Gastrocnemius medialis (tissue), 4 donors: ENCODE measurements at regions of chr20 and their contacts with region 1.

Region 1: DNA sequence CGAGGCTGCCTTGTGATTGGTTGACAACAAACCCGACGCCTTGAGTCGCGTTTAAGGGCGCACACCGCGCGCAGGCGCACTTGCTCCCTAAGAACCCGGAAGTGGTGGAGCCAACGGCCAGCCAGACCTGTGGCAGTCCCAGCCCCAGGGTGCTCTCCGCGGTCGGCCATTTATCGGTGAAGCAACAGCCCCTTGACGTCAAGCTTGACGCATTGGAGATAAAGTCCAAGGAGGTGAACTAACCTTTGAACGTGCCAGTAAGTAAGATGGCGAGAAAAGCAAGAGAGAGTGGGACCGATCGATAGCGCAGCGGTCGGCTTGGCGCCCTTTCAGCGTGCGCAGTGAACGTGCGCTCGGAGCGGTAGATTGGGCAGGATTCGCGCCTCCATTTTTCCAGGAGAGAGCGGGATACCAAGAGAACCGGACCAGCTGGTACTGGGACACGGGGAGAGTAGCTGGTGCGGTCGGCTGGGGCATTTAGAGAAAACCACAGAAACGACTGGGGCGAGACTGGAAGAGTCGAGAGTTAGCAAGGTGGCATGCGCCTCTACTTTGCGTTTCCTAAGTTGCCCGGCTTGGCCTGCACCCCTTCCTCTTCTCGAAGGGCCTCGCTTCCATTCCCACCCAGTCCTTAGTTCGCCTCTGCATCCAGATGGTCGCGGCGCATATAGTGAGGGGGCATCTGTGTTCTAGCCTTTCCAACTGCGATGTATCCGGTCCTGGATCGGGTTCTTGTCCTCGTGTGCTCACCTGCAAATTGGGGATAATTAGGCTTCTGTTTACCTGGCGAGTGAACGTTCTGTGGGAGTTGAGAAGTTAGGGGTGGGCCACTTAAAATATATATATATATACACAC is at the start of gene CSTF1:
- DNase-seq: peak; percentile 98 to 100
- ATAC-seq: peak; percentile 96 to 98
- H3K4me3 ChIP-seq: peak within 1 kb of the TSS; percentile 82 to 97 (median 86)
- H3K27ac ChIP-seq: peak within 1 kb of the TSS; percentile 86 to 94 (median 90)
- H3K4me1 ChIP-seq: peaks cover 22 to 23% of the 10 kb centered on the region in 2 donors
- H3K27me3 ChIP-seq: no peaks in the 10 kb centered on the region
- CTCF ChIP-seq: no peak
- POLR2A ChIP-seq: peak; percentile 37 to 52
- total RNA-seq, gene CSTF1: 14.2 to 23.2 (median 18.9) TPM

Region 2: GRCh38 chr20:56358596-56359211 is 33.8 kb before region 1 on chr20 and contains the start of gene FAM210B:
- in situ Hi-C with region 1: no loop called
- intact Hi-C with region 1: loop called (anchors 1 kb)
- DNase-seq: peak; percentile 76 to 87
- ATAC-seq: peak; percentile 88 to 93
- H3K4me3 ChIP-seq: peak within 1 kb of the TSS; percentile 62 to 93 (median 76)
- H3K27ac ChIP-seq: peak within 1 kb of the TSS; percentile 68 to 91 (median 81)
- H3K4me1 ChIP-seq: peaks cover 27 to 29% of the 10 kb centered on the region in 2 donors
- H3K27me3 ChIP-seq: no peaks in the 10 kb centered on the region
- CTCF ChIP-seq: no peak
- POLR2A ChIP-seq: peak; percentile 72 to 77
- total RNA-seq, gene FAM210B: 34.5 to 57.2 (median 41.4) TPM

Region 3: DNA sequence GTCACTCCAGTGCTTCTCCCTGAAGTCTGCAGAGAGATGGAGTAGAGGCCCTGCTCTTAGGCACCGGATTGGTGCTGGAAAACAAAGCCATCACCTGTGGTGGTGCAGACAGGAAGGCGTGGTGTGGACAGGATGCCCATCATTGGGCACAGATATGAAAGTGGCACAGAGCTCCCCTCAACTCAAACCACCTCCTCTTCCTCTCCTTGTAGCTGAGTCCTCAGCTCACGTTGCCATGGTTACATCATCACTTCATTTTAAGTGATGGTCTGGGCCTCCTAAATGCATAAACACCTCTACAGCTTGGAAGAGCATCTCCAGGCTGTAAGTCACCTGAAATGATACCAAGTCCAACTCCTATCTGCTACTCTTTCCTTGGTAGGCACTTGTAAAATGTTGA is 67.9 kb after region 1 on chr20:
- in situ Hi-C with region 1: loop called in 2 of 4 experiments (anchors 5 kb)
- intact Hi-C with region 1: no loop called
- DNase-seq: no peak
- ATAC-seq: no peak
- H3K4me3 ChIP-seq: no peak overlapping the region
- H3K27ac ChIP-seq: no peak overlapping the region
- H3K4me1 ChIP-seq: no peaks in the 10 kb centered on the region
- H3K27me3 ChIP-seq: no peaks in the 10 kb centered on the region
- CTCF ChIP-seq: no peak
- POLR2A ChIP-seq: no peak

Region 4: DNA sequence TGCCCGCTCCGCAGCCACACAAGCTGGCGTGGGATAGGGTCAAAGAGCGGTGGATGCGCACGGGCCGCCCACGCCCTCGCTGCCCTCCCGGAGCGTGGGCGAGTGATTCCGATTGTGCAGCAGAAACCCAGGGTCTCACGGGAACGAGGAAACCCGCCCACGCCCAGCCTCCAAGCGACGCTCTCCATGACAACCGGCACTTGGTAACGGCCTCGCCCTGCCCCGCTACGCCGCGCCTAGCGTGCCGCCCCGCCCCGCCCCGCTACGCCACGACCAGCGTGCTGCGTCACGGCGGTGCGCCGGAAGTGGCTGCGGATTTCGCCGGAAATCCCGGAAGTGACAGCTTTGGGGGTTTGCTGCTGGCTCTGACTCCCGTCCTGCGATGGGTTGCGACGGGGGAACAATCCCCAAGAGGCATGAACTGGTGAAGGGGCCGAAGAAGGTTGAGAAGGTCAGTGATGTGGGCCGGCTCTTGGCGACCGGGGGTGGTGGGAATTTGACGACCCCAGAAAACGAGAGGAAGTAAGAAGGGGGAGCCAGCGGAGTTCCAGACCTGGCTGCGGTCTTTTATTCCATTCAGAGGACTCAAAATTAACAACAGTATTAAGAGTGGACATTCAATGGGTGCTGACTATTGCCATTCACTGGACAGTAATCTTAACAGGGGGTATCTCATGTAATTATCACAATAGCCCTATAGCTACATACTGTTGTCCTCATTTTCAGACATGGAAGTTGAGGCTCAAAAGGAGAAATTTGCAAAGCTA is 76.0 kb after region 1 on chr20 and contains the start of gene RTF2:
- in situ Hi-C with region 1: loop called in 3 of 4 experiments (anchors 5 to 10 kb)
- intact Hi-C with region 1: loop called (anchors 1 kb)
- DNase-seq: peak; percentile 78 to 84
- ATAC-seq: peak; percentile 95 to 97
- H3K4me3 ChIP-seq: peak within 1 kb of the TSS; percentile 73 to 93 (median 92)
- H3K27ac ChIP-seq: peak within 1 kb of the TSS; percentile 79 to 87 (median 86)
- H3K4me1 ChIP-seq: peaks cover 27% of the 10 kb centered on the region in 2 donors
- H3K27me3 ChIP-seq: no peaks in the 10 kb centered on the region
- CTCF ChIP-seq: peak in 1 of 5 experiments; percentile 7
- POLR2A ChIP-seq: peak; percentile 31 to 49
- total RNA-seq, gene RTF2: 69.1 to 88.8 (median 77.5) TPM

Region 5: DNA sequence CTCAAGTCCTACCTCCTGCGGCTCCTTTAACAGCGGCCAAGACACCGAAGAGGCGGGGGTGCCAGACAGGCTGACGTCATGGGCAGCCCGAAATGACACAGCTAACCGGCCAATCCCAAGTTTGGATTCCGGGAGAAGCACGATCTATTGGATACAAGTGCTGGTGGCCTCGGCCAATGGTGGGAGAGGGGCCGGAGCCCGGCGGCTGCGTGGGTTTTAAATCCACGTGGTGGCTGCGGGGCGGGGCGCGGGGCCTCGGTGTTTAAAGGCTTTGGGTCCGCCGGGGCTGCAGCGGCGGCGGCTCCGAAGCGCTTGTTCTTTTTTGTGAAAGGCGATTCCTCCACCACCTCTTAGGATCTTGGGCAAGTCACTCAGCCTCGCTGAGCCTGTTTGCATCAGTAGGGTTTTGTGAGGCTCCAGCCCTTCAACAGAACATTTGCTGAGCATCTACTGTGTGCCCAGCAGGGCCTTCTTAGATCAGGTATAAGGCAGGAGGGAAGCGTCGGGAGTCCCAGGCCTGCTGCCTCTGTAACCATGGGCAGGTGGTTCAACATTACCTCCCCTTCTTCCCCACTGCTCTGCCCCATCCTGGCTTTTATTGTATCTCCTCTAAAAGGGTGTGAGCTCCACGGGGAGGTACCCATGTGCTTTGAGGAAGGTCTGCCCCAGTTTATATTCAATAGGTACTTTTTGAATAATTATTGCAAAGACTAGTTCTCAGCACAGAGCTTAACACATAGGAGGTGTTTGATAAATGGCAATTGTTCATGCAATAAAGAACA is 1326.2 kb after region 1 on chr20:
- in situ Hi-C with region 1: loop called in 1 of 4 experiments (anchors 25 kb)
- intact Hi-C with region 1: no loop called
- DNase-seq: peak; percentile 97 to 98
- ATAC-seq: peak; percentile 92 to 96
- H3K4me3 ChIP-seq: peak overlapping the region; percentile 32 to 45 (median 36)
- H3K27ac ChIP-seq: peak overlapping the region; percentile 21 to 79 (median 57)
- H3K4me1 ChIP-seq: peaks cover 49 to 54% of the 10 kb centered on the region in 2 donors
- H3K27me3 ChIP-seq: no peaks in the 10 kb centered on the region
- CTCF ChIP-seq: no peak
- POLR2A ChIP-seq: no peak